Posterior vena cava (tissue), 2 donors: ENCODE measurements at regions of chr9 and their contacts with region 1.

Region 1: GRCh38 chr9:29588361-29588760 is 2015.1 kb upstream of the C9orf72 start:
- DNase-seq: no peak

Region 2: DNA sequence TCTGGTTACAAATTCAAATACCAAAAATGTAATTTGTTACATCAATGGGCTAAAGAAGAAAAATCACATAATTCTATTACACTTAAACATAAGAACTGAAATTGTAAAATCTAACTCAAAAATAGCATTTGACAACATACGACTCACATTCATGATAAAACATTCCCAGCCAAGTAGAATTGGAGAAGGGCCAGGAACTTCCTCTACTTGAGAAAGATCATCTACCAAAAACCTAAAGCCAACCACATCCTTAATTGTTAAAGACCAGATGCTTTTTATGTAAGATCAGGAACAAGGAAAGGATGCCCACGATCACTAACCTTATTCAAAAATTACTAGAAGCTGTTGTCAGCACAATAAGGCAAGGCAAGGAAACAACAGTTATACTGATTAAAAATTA is 195.3 kb before region 1 on chr9:
- intact Hi-C with region 1: no loop called
- DNase-seq: no peak

Region 3: DNA sequence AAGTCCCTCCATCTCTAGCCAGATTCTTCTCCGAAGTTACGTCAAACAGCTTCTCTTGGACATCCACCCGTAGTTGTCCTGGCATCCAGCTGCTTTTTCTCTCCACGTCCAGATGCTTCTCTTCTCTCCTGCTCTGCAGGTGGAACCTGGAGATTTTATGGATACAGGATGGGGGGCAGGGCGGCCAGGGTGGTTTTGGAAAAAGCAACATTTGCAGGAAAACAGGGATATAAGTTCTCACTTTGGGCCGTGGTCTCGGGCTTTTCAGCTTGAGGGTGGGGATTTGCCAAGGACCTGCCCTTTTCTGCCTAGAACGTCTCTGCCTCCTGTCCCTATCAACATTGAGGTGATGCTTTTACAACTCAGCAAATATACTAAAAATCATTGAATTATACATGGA is 73.5 kb before region 1 on chr9:
- intact Hi-C with region 1: loop called in 1 of 2 experiments (anchors 10 kb)
- DNase-seq: no peak

Region 4: GRCh38 chr9:29548436-29548835 is 39.9 kb before region 1 on chr9:
- intact Hi-C with region 1: no loop called
- DNase-seq: no peak